ENCODE measurements at regions of chr21 and their contacts with region 1.

Region 1: DNA sequence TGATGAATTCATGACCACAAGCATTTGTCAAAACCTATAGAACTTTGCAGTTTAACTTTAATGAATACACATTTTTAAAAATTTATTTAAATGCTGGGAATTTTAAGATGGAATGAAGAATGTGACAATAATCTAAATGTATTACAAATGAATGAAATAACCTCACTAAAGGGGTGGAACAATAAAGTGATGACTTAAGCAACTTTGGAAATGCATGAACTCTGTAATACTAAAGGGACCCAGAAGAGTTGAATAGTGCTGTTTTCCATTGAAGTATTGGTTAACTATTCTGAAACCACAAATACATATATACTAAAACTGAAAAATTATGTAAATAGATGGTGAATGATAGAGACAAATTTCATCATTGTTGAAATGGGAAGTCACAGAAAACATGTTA is 1395.1 kb downstream of the NCAM2 start:
- DNase-seq: no peak
- H3K4me3 ChIP-seq: no peak overlapping the region
- H3K27ac ChIP-seq: no peak overlapping the region
- H3K4me1 ChIP-seq: no peaks in the 10 kb centered on the region
- H3K27me3 ChIP-seq: no peaks in the 10 kb centered on the region
- CTCF ChIP-seq: no peak
- EP300 ChIP-seq: no peak
- POLR2A ChIP-seq: no peak

Region 2: GRCh38 chr21:21439761-21440160 is 953.6 kb before region 1 on chr21:
- intact Hi-C with region 1: no loop called
- DNase-seq: no peak
- H3K4me3 ChIP-seq: no peak overlapping the region
- H3K27ac ChIP-seq: no peak overlapping the region
- H3K4me1 ChIP-seq: no peaks in the 10 kb centered on the region
- H3K27me3 ChIP-seq: no peaks in the 10 kb centered on the region
- CTCF ChIP-seq: no peak
- EP300 ChIP-seq: no peak
- POLR2A ChIP-seq: no peak

Region 3: GRCh38 chr21:23067672-23068071 is 674.3 kb after region 1 on chr21:
- intact Hi-C with region 1: loop called in 1 of 4 experiments (anchors 5 kb)
- DNase-seq: no peak
- H3K4me3 ChIP-seq: no peak overlapping the region
- H3K27ac ChIP-seq: no peak overlapping the region
- H3K4me1 ChIP-seq: no peaks in the 10 kb centered on the region
- H3K27me3 ChIP-seq: no peaks in the 10 kb centered on the region
- CTCF ChIP-seq: no peak
- EP300 ChIP-seq: no peak
- POLR2A ChIP-seq: no peak